ENCODE measurements at regions of chr12 and their contacts with region 1.

Region 1: GRCh38 chr12:14167005-14167628 is 185.7 kb upstream of the GRIN2B start:
- DNase-seq: peak; percentile 72
- H3K4me3 ChIP-seq: no peak overlapping the region
- H3K27ac ChIP-seq: no peak overlapping the region
- H3K4me1 ChIP-seq: peaks cover 38% of the 10 kb centered on the region
- CTCF ChIP-seq: peak; percentile 100

Region 2: GRCh38 chr12:13362260-13362841 is 804.8 kb before region 1 on chr12:
- CTCF ChIA-PET with region 1: no interaction called
- POLR2A ChIA-PET with region 1: no interaction called
- intact Hi-C with region 1: loop called (anchors 5 kb)
- DNase-seq: peak; percentile 58
- H3K4me3 ChIP-seq: no peak overlapping the region
- H3K27ac ChIP-seq: no peak overlapping the region
- H3K4me1 ChIP-seq: no peaks in the 10 kb centered on the region
- CTCF ChIP-seq: peak; percentile 89

Region 3: GRCh38 chr12:13744561-13744960 is 422.6 kb before region 1 on chr12:
- CTCF ChIA-PET with region 1: no interaction called
- POLR2A ChIA-PET with region 1: interaction called, 3 read pairs
- intact Hi-C with region 1: loop called (anchors 1 kb)
- DNase-seq: no peak
- H3K4me3 ChIP-seq: no peak overlapping the region
- H3K27ac ChIP-seq: no peak overlapping the region
- H3K4me1 ChIP-seq: no peaks in the 10 kb centered on the region
- CTCF ChIP-seq: no peak

Region 4: GRCh38 chr12:13941258-13942249 is 225.6 kb before region 1 on chr12:
- CTCF ChIA-PET with region 1: interaction called, 3 read pairs
- POLR2A ChIA-PET with region 1: interaction called, 4 read pairs
- intact Hi-C with region 1: loop called (anchors 2 kb)
- DNase-seq: peak; percentile 46
- H3K4me3 ChIP-seq: no peak overlapping the region
- H3K27ac ChIP-seq: no peak overlapping the region
- H3K4me1 ChIP-seq: no peaks in the 10 kb centered on the region
- CTCF ChIP-seq: peak; percentile 80

Region 5: DNA sequence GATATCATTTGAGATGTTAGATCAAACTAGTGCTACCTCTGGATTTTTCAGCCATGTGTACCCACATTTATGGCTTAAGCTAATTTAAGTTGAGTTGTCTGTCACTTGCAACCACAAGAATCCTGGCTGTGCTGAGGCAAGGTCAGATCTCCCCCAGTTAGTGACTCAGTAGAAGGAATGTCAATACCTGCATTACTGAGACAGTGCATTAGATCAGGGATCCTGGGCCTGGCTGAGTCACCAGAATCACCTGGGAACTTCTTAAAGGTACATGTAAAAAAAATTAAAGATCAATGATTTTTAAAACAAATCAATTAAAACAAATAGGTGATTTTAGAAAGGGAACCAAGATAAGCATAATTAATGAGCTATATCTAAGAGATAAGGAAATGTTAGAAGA is 101.1 kb before region 1 on chr12:
- CTCF ChIA-PET with region 1: no interaction called
- POLR2A ChIA-PET with region 1: no interaction called
- intact Hi-C with region 1: loop called (anchors 5 kb)
- DNase-seq: no peak
- H3K4me3 ChIP-seq: no peak overlapping the region
- H3K27ac ChIP-seq: peak overlapping the region; percentile 80
- H3K4me1 ChIP-seq: peaks cover 22% of the 10 kb centered on the region
- CTCF ChIP-seq: no peak

Region 6: DNA sequence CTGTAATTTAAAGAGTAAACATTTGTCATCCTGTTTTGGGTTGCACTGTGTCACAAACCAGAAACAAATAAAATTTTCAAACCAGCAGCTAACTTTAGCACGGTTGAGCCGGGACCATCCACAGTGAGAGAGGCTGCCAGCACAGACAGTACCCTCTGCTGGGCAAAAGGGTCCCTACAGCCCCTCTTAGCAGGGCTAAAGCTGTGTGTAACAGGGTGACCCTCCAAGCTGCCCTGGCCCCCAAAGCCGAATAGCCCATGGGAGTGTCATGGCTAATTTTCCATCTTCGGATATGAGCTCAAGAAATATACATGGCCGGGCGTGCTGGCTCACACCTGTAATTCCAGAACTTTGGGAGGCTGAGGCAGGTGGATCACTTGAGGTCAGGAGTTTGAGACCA is 28.6 kb before region 1 on chr12:
- CTCF ChIA-PET with region 1: no interaction called
- POLR2A ChIA-PET with region 1: interaction called, 10 read pairs
- intact Hi-C with region 1: no loop called
- DNase-seq: peak; percentile 66
- H3K4me3 ChIP-seq: no peak overlapping the region
- H3K27ac ChIP-seq: no peak overlapping the region
- H3K4me1 ChIP-seq: peaks cover 7% of the 10 kb centered on the region
- CTCF ChIP-seq: peak; percentile 81

Region 7: GRCh38 chr12:15892645-15893259 is 1725.6 kb after region 1 on chr12:
- CTCF ChIA-PET with region 1: no interaction called
- POLR2A ChIA-PET with region 1: no interaction called
- intact Hi-C with region 1: no loop called
- DNase-seq: no peak
- H3K4me3 ChIP-seq: no peak overlapping the region
- H3K27ac ChIP-seq: no peak overlapping the region
- H3K4me1 ChIP-seq: no peaks in the 10 kb centered on the region
- CTCF ChIP-seq: no peak

Measured in OCI-LY7 (cell line).